Common myeloid progenitor, CD34-positive (primary cell): ENCODE measurements at regions of chr9 and their contacts with region 1.

Region 1: GRCh38 chr9:84697509-84698114 is 28.1 kb downstream of the NTRK2 start:
- DNase-seq: peak; percentile 43 to 61 (median 57)
- H3K4me3 ChIP-seq: no peak overlapping the region
- H3K27ac ChIP-seq: no peak overlapping the region
- H3K4me1 ChIP-seq: no peaks in the 10 kb centered on the region
- H3K27me3 ChIP-seq: peaks cover 0 to 33% (median 20%) of the 10 kb centered on the region in 5 experiments

Region 2: DNA sequence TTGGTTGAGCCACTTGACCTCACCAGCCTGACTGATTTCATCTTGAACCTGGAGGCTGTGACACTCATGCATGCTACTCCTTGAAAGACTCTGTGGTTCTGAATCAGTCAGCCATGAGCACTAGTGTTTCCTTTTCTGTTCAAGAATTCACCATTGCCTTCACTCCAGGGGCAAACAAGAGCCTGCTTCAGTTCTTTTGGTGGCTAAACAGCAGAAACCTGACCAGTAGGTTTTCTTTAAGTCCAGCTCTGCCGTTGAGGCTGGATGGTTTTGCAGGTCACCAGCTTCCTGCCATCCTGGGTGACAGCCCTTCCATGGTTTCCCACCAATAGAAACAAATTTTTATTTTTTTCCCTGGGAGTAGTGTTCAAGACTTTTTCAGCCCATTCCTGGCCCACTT is 18.0 kb before region 1 on chr9:
- CTCF ChIA-PET with region 1: no interaction called
- POLR2A ChIA-PET with region 1: no interaction called
- DNase-seq: no peak
- H3K4me3 ChIP-seq: no peak overlapping the region
- H3K27ac ChIP-seq: no peak overlapping the region
- H3K4me1 ChIP-seq: no peaks in the 10 kb centered on the region
- H3K27me3 ChIP-seq: peaks cover 0 to 13% (median 5%) of the 10 kb centered on the region in 5 experiments

Region 3: GRCh38 chr9:84716217-84716616 is 18.6 kb after region 1 on chr9:
- CTCF ChIA-PET with region 1: interaction called, 10 read pairs
- POLR2A ChIA-PET with region 1: no interaction called
- DNase-seq: no peak
- H3K4me3 ChIP-seq: no peak overlapping the region
- H3K27ac ChIP-seq: no peak overlapping the region
- H3K4me1 ChIP-seq: no peaks in the 10 kb centered on the region
- H3K27me3 ChIP-seq: peaks cover 6 to 56% (median 11%) of the 10 kb centered on the region in 5 experiments

Region 4: DNA sequence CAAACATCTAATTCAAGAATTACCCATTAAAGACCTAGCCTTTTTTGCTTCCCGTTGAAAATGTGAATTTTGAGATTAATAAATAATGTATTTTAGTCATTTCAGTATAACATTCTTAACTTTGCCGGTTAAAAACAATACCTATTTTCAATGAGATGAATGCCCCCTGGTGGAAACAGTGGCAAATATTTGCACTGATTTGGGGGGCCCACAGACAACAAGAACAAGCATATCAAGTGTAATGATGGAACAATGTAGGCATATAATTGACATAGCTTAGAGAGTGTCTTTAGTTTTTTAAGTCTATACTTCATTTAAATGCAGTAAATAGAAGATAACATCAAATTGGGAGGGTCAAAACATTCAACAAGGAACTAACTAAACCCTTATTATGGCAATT is 83.8 kb after region 1 on chr9:
- CTCF ChIA-PET with region 1: interaction called, 43 read pairs
- POLR2A ChIA-PET with region 1: no interaction called
- DNase-seq: peak; percentile 21 to 54 (median 43)
- H3K4me3 ChIP-seq: no peak overlapping the region
- H3K27ac ChIP-seq: no peak overlapping the region
- H3K4me1 ChIP-seq: no peaks in the 10 kb centered on the region
- H3K27me3 ChIP-seq: peaks cover 0 to 50% (median 18%) of the 10 kb centered on the region in 5 experiments